BJ (cell line): ENCODE measurements at regions of chr14 and their contacts with region 1.

Region 1: GRCh38 chr14:93939304-93940229 is 12.4 kb downstream of the FAM181A start:
- DNase-seq: no peak
- H3K4me3 ChIP-seq: peak overlapping the region; percentile 23; the same call in 1 of the 2 replicates
- H3K27me3 ChIP-seq: peaks cover 10% of the 10 kb centered on the region
- CTCF ChIP-seq: peak; percentile 64

Region 2: GRCh38 chr14:93200553-93200952 is 739.0 kb before region 1 on chr14:
- CTCF ChIA-PET with region 1: no interaction called
- POLR2A ChIA-PET with region 1: no interaction called
- DNase-seq: no peak
- H3K4me3 ChIP-seq: no peak overlapping the region
- H3K27me3 ChIP-seq: no peaks in the 10 kb centered on the region
- CTCF ChIP-seq: no peak

Region 3: DNA sequence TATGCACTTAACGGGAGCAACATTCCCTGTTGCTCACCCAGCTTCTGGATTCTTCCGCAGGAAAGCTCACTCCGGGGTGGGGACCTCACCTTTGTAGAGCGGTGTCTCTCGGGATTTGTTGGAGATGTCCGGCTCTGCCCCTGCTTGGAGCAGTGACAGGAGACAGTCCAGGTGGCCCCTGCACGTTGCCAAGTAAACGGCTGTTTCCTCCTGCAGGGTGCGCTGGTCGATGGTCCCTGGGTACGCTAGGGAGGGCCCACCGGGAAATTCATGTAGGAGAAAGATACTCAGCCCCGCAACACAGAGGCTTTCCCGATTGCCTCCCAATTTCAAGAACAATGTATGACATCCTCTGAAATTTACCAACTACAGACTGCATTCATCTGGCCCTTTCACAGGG is 13.7 kb after region 1 on chr14:
- CTCF ChIA-PET with region 1: interaction called, 16 read pairs
- POLR2A ChIA-PET with region 1: no interaction called
- DNase-seq: no peak
- H3K4me3 ChIP-seq: no peak overlapping the region
- H3K27me3 ChIP-seq: no peaks in the 10 kb centered on the region
- CTCF ChIP-seq: no peak

Region 4: DNA sequence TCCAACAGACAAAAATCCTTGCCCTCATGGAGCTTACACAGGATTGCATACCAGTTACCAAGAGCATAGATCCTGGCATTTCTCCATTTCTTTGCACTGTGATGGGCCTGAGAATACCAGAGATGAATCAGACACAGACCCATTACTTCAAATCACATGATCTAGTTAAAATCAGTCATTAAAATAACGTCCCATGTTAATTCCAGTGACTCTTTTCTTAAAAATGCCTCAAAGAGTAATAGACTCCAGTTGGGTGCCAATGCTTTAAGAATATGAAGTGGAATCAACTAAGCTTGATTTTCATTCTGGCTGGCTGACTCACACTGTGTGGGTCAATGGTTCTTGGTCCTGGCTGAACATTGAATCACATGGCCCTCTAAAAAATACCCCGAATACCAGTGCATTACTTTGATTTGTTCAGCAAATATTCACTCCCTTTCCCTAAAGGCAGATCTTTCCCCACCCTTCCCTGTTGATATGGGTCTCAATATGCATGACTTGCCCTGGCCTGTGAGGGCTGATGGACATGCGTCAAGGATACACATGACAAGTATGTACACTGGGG is 25.8 kb after region 1 on chr14:
- CTCF ChIA-PET with region 1: interaction called, 22 read pairs
- POLR2A ChIA-PET with region 1: no interaction called
- DNase-seq: peak; percentile 97
- H3K4me3 ChIP-seq: no peak overlapping the region
- H3K27me3 ChIP-seq: no peaks in the 10 kb centered on the region
- CTCF ChIP-seq: no peak

Region 5: DNA sequence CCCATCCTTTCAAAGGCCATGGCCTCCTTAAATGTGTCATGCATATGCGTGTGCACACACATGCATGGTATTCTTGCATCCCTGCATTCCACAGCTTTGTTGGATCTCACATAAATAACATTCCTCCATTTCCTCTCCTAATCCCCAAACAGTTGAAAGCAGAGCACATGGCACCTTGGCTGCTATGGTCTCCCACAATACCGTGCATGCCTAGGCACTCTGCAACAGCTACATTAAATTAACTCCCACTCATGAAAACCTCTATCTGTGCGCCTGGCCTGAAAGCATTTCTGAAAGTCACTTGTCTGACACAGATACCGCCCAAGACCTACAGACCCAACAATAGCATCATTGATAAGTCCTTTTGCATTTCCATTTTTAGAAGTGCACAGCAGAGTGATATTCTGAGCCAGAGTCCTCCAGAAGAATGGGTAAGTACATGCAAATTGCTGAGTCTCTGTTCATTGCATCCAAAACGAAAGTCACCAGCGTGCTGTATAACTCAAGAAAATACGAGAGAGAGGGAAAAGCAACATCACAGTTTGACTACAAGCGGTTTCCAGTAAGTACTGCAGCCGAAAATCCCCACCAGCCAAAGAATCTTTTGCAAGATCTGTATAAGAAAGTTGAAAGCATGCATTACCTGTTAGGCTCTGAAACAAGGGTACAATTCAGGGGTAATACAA is 36.4 kb after region 1 on chr14:
- CTCF ChIA-PET with region 1: interaction called, 22 read pairs
- POLR2A ChIA-PET with region 1: no interaction called
- DNase-seq: no peak
- H3K4me3 ChIP-seq: no peak overlapping the region
- H3K27me3 ChIP-seq: peaks cover 8% of the 10 kb centered on the region
- CTCF ChIP-seq: no peak

Region 6: DNA sequence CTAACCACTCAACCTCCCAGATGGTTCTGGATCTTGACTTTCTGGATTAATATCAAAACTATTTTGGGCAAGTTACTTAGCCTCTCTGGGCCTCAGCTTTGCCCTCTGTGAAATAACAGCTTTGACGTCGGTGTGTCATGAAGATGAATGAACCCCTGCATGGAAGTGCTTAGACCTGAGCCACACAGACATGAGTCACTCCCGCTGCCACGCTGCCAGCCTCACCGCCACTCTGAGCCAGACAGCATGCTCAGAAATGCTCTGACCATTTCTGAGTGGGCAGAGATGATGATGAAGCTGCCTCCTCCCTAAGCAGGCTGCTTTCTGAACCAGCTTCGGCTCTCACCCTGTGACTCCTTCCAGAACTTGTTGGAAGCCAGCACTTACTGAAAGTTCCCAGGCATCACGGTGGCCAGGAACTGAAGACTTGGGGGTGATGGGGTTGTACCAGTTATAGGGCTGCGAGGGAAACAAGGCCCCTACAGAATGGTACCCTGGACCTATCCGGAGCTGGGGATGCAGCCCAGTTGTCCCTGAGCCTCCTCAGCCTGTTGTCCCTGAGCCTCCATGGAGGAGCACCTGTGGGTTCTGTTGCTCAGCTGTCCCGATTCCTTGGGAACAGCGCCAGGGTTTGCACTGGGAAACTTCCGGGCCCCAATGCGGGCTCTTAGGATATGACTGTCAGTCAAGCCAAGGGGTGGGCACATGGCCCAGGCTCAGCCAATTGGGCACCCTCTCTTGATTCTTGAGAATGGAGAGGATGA is 55.5 kb after region 1 on chr14:
- CTCF ChIA-PET with region 1: interaction called, 387 read pairs
- POLR2A ChIA-PET with region 1: no interaction called
- DNase-seq: no peak
- H3K4me3 ChIP-seq: no peak overlapping the region
- H3K27me3 ChIP-seq: peaks cover 4% of the 10 kb centered on the region; the same call in 1 of the 2 replicates
- CTCF ChIP-seq: no peak

Region 7: DNA sequence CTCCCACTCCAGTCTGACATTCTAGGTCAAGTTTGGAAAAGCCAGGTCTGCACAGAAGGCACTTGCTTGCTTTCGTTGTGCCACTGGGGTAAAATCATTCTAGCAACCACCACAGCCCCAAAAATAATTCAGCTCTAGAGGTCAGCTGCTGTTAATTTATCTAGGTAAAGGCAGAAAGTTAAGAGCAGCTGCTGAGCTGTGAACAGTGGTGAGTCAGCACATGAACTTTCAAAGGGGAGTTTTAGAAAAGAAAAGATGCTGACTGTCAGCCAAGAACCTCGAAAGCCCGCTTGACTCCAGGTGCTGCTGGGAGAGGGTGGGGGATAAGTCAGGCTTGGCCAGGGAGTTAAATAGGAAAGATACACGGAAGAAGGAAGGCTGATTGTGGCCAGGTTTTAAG is 70.2 kb after region 1 on chr14:
- CTCF ChIA-PET with region 1: interaction called, 387 read pairs
- POLR2A ChIA-PET with region 1: no interaction called
- DNase-seq: no peak
- H3K4me3 ChIP-seq: no peak overlapping the region
- H3K27me3 ChIP-seq: peaks cover 5% of the 10 kb centered on the region
- CTCF ChIP-seq: no peak